Activated T-helper 2 cell treated with anti-CD3 and anti-CD28 coated beads, Interferon-gamma antibody, Interleukin-2, Interleukin-4, amounts not matched to agents 10 μg/mL and 5 μg/mL and 100 μg/mL, durations not matched to agents 14 hours and 24 hours and 36 hours (primary cell): ENCODE measurements at regions of chr1 and their contacts with region 1.

Region 1: DNA sequence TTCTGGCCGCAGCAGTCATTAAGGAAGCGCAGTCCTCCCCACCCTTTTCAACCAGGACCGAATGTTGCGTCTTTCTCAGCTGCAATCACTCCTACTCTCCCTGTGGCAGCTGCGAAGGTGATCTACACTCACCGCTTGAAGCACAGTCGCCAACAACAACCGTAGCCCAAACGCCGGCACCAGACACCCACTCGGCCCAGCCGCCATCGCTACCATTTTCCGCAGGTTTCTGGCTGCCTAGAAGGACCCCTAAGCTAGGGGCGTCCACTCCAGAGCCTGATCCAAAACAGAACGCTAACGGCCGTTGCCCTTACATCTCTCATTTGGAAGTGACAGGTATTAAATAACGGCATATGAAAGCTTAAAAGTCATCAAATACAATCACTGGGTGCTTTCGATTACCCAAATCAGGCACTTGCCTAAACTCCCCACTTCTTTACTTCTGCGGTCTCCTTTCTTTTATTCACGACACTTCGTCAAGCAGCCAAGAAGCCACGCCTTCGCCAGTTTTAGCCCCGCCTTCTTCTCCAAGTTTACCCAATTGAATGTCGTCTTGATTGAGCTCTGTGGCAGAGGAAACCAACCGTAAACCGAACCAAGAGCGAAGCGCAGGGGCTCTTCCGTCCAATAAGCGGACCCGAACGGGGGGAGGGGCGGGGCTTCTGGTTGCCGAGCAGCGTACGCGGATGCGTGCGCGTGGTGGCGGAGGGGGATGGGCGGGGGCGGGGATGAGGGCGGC is at the start of gene SELENOF:
- DNase-seq: peak; percentile 99
- H3K4me3 Mint-ChIP-seq: no peak within 1 kb of the TSS
- H3K27ac Mint-ChIP-seq: no peak within 1 kb of the TSS
- H3K4me1 Mint-ChIP-seq: peaks cover 31% of the 10 kb centered on the region
- H3K27me3 Mint-ChIP-seq: no peaks in the 10 kb centered on the region
- total RNA-seq, gene SELENOF: 187 and 192 TPM in 2 replicates

Region 2: GRCh38 chr1:86704458-86704971 is 209.6 kb before region 1 on chr1 and contains the start of gene SH3GLB1:
- intact Hi-C with region 1: loop called (anchors 1 kb)
- DNase-seq: peak; percentile 89
- H3K4me3 Mint-ChIP-seq: peak within 1 kb of the TSS; percentile 98
- H3K27ac Mint-ChIP-seq: peak within 1 kb of the TSS; percentile 97
- H3K4me1 Mint-ChIP-seq: peaks cover 38% of the 10 kb centered on the region
- H3K27me3 Mint-ChIP-seq: peaks cover 8% of the 10 kb centered on the region
- total RNA-seq, gene SH3GLB1: 60.5 and 65.7 TPM in 2 replicates

Region 3: GRCh38 chr1:86998727-86999126 is 84.7 kb after region 1 on chr1:
- intact Hi-C with region 1: loop called (anchors 2 kb)
- DNase-seq: no peak
- H3K4me3 Mint-ChIP-seq: no peak overlapping the region
- H3K27ac Mint-ChIP-seq: no peak overlapping the region
- H3K4me1 Mint-ChIP-seq: peaks cover 29% of the 10 kb centered on the region
- H3K27me3 Mint-ChIP-seq: no peaks in the 10 kb centered on the region

Region 4: DNA sequence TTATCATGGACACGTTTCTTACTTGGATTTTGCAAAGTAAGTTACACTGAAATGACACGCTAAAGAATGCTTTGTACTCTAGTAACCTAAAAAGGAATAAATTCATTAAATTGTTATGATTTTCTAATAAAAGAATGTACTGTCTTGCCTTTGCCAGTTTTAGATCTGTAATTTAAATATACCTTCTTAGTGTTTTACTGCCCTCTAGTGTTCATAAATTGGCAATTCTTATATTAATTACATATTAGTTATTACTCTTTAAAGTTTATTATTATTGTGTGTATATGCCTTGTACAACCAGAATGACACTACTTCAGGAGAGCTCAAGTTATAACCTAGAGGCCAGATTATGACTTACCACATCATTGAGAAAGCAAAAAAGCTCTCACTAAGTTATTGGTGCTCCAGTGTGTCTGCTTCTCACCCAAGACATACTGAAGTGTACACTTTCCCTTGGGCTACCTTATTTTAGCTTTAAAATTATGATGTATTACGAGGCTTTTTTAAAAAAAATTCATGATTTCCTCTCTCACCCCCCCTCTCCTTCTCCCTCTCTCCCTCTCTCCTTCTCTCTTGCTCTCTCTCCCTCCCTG is 170.3 kb after region 1 on chr1:
- intact Hi-C with region 1: loop called (anchors 1 kb)
- DNase-seq: no peak
- H3K4me3 Mint-ChIP-seq: no peak overlapping the region
- H3K27ac Mint-ChIP-seq: no peak overlapping the region
- H3K4me1 Mint-ChIP-seq: peaks cover 22% of the 10 kb centered on the region
- H3K27me3 Mint-ChIP-seq: no peaks in the 10 kb centered on the region

Region 5: DNA sequence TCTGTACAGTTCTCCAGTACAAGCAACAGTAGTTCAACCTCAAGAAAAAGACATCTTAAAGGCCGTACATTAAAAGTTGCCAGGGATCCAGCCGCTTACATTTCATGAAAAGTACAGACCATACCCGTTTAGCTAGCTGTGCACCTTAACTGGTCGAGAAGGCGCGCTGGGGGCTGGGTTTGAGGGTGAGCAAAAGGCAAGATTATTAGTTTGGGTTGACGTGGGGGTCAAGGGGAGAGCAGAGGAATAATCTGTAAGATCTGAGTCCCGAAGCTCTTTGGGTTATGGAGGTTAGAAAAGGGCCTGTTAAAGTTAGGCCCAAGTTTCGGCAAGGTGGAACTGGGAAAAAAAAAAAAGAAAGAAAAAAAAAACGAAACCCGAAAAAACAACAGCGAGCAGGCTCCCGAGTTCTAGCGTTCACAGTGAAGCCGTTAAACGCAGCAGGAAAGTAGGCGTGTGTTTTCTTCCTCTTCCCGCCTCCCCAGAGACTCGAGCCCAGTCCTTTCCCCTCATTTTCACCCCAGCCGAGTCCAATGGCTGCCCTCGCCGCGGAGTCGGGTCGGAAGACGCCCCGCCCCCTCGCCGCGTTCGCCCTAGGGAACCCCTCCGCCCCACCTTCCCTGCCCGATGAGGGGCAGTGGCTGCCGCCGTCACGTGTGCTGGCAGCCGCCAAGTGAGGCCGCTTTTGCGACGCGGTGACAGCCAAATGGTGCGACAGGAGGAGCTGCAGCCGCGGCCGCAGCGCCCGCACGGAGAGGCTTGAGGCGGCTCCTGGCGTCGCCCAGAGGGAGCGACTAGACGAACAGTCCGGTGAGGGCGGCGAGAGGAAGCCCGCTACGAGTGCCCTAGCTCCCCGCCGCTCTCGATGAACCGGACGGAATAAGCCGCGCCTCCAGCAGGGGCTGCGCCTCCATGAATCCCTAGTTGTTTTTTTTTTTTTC is 1769.7 kb after region 1 on chr1 and contains the start of gene PKN2:
- intact Hi-C with region 1: loop called (anchors 5 kb)
- DNase-seq: peak; percentile 97
- H3K4me3 Mint-ChIP-seq: peak within 1 kb of the TSS; percentile 99
- H3K27ac Mint-ChIP-seq: peak within 1 kb of the TSS; percentile 98
- H3K4me1 Mint-ChIP-seq: peaks cover 20% of the 10 kb centered on the region
- H3K27me3 Mint-ChIP-seq: peaks cover 9% of the 10 kb centered on the region
- total RNA-seq, gene PKN2: 21.2 and 21.4 TPM in 2 replicates